ENCODE measurements at regions of chr4 and their contacts with region 1.

Region 1: GRCh38 chr4:147731580-147732517 is at the start of gene ARHGAP10:
- DNase-seq: peak; percentile 70
- H3K27ac ChIP-seq: peak within 1 kb of the TSS; percentile 94
- CTCF ChIP-seq: no peak

Region 2: DNA sequence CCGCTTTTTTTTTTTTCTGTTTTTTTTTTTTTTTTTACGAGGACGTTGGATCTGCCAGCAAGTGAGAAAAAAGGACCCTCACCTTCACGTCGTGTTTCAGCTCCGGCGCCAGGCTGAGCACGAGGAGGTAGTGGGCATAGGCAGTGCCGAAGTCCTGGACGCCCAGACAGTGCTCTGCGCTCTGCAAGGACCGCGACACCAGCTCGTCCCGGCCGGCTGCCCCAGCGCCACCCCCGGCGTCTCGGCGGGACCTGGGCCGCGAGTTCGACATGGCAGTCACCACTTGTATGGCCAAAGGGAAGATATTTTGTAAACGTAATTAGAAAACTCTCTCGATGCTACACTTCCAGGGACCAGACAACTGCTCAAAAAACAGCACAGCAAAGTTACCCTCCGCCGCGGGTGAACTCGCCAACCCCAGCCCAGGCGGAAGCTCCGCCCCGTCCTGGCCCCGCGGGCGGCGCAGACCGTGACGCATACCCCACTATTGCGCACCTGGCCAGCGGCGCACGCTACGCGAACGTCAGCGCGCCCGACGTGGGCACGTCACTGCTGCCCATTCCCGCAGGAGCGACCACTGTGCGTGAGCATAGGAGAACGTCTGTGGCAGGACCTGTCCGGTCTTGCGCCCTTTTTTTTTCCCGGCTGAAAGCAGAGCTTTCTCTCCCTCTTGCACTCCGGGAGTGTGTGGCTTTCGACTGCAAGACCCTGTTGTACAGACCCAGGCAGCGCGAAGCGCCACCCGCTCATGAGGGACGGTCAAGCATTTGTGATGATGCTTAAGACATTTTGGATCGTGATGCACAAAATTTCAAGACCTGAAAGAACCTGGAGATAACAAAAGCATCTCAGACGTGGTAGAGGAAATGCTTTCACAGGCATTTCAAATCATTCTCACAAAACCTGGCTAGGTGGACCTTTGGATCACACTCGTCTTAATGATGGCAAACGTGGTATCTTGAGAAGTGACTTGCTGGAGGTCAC is 47.8 kb before region 1 on chr4 and contains the start of gene PRMT9:
- CTCF ChIA-PET with region 1: interaction called, 4 read pairs
- POLR2A ChIA-PET with region 1: interaction called, 14 read pairs
- DNase-seq: peak; percentile 95
- H3K27ac ChIP-seq: peak within 1 kb of the TSS; percentile 83
- CTCF ChIP-seq: no peak

Region 3: DNA sequence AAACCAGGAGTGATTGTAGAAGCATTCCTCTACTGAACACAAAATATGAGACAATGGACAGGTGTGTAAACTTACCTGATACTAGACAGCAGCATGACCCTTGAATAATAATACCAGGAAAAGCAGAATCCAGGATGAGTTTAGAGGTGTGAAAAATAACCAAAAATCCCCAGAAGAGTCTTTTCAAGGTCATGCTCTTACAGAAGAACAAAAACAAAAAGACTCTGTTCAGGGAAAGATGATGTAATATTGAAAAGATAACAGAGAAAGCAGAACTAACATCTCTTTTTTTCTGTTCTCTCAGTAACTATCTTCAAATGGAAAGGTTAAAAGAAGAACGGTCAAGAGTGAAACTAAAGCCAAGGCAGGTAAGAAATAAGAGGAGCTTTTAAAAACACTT is 14.0 kb before region 1 on chr4:
- CTCF ChIA-PET with region 1: no interaction called
- POLR2A ChIA-PET with region 1: no interaction called
- DNase-seq: no peak
- H3K27ac ChIP-seq: no peak overlapping the region
- CTCF ChIP-seq: no peak

Region 4: DNA sequence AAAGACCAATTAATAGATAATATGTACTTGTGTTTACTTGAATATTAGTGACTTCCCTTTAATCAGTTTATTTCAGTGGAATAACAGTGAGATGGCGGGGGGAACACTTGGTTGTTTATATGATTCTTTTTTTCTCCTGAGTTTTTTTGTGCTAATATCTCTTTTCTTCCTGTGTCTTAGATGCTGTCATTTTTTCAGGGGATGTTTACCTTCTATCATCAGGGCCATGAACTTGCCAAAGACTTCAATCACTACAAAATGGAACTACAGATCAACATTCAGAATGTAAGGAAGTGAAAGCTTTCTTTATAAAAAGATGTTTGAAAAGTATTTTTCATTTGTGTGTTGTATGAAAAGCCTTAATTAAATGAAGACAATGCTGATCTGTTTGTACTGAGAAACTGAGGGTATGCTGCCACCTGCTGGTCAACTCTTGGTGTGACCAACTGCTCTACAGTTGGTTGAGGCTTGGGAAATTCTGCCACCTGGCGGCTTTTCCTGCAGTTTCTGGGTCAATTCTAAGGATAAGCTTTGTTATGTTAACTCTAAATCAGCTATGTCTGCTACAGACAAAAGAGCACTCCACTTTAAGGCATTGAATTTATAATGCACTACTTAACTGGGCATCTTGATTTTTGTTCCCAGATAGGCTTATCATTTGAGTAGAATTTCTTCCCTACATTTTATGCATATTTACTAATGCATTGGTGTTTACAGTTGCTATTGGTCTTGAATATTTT is 134.9 kb after region 1 on chr4:
- CTCF ChIA-PET with region 1: interaction called, 15 read pairs
- POLR2A ChIA-PET with region 1: no interaction called
- DNase-seq: peak; percentile 74
- H3K27ac ChIP-seq: no peak overlapping the region
- CTCF ChIP-seq: peak; percentile 97

Measured in RWPE1 (cell line).